ENCODE measurements at regions of chr11 and their contacts with region 1.

Region 1: GRCh38 chr11:9363954-9364912 is 20.2 kb upstream of the IPO7 start:
- DNase-seq: peak; percentile 91
- H3K4me3 Mint-ChIP-seq: peak overlapping the region; percentile 66
- H3K27ac Mint-ChIP-seq: peak overlapping the region; percentile 73
- H3K4me1 Mint-ChIP-seq: peaks cover 35% of the 10 kb centered on the region
- H3K27me3 Mint-ChIP-seq: no peaks in the 10 kb centered on the region

Region 2: DNA sequence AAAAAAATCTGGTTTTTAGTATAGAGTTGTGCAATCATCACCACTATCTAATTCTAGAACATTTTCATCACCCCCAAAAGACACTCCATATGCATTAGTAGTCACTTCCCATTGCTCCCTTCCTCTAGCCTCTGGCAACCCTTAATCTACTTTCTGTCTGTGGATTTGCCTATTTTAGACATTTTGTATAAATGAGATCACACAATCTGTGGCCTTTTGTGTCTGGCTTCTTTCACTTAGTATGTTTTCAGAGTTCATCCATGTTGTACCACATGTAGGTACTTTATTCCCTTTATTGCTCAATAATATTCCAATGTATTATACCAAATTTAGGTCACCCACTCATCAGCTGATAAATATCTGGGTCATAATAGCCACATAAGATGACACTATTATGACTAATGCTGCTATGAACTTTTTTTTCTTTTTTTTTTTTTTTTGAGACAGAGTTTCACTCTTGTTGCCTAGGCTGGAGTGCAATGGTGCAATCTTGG is 205.3 kb before region 1 on chr11:
- CTCF ChIA-PET with region 1: interaction called, 3 read pairs
- intact Hi-C with region 1: loop called (anchors 10 kb)
- DNase-seq: no peak
- H3K4me3 Mint-ChIP-seq: no peak overlapping the region
- H3K27ac Mint-ChIP-seq: peak overlapping the region; percentile 84
- H3K4me1 Mint-ChIP-seq: peaks cover 29% of the 10 kb centered on the region
- H3K27me3 Mint-ChIP-seq: no peaks in the 10 kb centered on the region

Region 3: DNA sequence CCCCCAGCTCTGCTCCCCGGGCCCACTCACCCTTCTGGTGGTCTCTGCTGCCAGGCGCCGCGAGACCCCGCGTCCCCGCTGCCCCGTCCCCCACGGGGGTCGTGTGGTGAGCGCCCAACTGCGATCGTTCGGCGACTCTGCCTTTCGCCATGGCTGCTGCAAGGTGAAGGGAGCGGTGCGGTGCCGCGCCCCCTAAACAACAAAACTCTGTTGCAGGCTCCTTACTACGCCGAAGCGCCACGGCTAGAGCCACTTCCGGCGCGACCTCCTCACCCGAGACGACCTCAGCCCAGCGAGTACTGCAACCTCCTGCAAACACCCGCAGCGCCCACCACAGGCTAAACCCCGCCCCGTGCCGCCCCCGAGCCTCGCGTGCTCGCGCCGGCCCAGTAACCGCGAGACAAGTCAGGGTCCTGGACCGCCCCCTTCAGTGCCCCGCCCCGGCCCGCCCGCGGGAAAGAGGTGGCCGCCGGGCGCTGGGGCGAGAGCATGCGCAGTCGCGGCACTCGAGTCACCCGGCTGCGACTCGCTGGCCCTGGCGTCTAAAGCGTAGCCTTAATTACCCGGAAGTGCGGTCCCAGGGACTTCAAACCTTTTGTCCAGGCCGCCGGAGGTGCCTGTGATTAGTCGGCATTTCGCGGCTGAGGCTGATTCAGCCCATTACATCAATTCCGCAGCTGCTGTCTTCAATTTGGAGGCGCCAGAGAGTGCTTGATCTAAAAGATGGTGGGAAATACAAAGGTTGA is 49.8 kb before region 1 on chr11 and contains the start of gene TMEM41B:
- CTCF ChIA-PET with region 1: interaction called, 5 read pairs
- intact Hi-C with region 1: loop called (anchors 1 kb)
- DNase-seq: peak; percentile 99
- H3K4me3 Mint-ChIP-seq: peak within 1 kb of the TSS; percentile 99
- H3K27ac Mint-ChIP-seq: peak within 1 kb of the TSS; percentile 92
- H3K4me1 Mint-ChIP-seq: peaks cover 37% of the 10 kb centered on the region
- H3K27me3 Mint-ChIP-seq: peaks cover 13% of the 10 kb centered on the region
- total RNA-seq, gene TMEM41B: 27.8 to 30.5 TPM

Region 4: GRCh38 chr11:9384535-9385303 is 20.5 kb after region 1 on chr11 and contains the start of gene IPO7:
- CTCF ChIA-PET with region 1: no interaction called
- intact Hi-C with region 1: loop called (anchors 1 kb)
- DNase-seq: peak; percentile 94
- H3K4me3 Mint-ChIP-seq: peak within 1 kb of the TSS; percentile 92
- H3K27ac Mint-ChIP-seq: peak within 1 kb of the TSS; percentile 83
- H3K4me1 Mint-ChIP-seq: peaks cover 36% of the 10 kb centered on the region
- H3K27me3 Mint-ChIP-seq: no peaks in the 10 kb centered on the region
- total RNA-seq, gene IPO7: 164 to 177 TPM

Region 5: GRCh38 chr11:9565822-9566560 is 201.8 kb after region 1 on chr11:
- CTCF ChIA-PET with region 1: no interaction called
- intact Hi-C with region 1: loop called (anchors 1 kb)
- DNase-seq: peak; percentile 81
- H3K4me3 Mint-ChIP-seq: no peak overlapping the region
- H3K27ac Mint-ChIP-seq: peak overlapping the region; percentile 65
- H3K4me1 Mint-ChIP-seq: peaks cover 9% of the 10 kb centered on the region
- H3K27me3 Mint-ChIP-seq: no peaks in the 10 kb centered on the region

Measured in activated naive CD4-positive, alpha-beta T cell treated with anti-CD3 and anti-CD28 coated beads for 36 hours (primary cell).